ENCODE measurements at regions of chr14 and their contacts with region 1.

Region 1: GRCh38 chr14:48771717-48772116 is 814.5 kb downstream of the RPS29 start:
- DNase-seq: no peak
- ATAC-seq: no peak
- H3K4me3 ChIP-seq: no peak overlapping the region
- H3K4me3 Mint-ChIP-seq: no peak overlapping the region
- H3K27ac ChIP-seq: no peak overlapping the region
- H3K27ac Mint-ChIP-seq: no peak overlapping the region
- H3K4me1 ChIP-seq: no peaks in the 10 kb centered on the region
- H3K4me1 Mint-ChIP-seq: no peaks in the 10 kb centered on the region
- H3K27me3 ChIP-seq: no peaks in the 10 kb centered on the region
- H3K27me3 Mint-ChIP-seq: no peaks in the 10 kb centered on the region
- CTCF ChIP-seq: no peak

Region 2: DNA sequence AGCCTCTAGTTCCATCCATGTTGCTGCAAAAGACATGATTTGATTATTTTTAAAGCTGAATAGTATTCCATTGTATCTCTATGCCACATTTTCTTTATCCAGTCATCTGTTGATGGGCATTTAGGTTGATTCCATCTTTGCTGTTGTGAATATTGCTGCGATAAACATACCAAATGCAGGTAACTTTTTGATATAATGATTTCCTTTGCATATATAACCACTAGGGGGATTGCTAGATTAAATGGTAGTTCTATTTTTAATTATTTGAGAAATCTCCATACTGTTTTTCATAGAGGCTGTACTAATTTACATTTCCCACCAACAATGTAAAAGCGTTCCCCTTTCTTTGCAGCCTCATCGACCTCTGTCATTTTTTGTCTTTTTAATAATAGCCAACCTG is 1438.8 kb before region 1 on chr14:
- CTCF ChIA-PET with region 1: no interaction called
- POLR2A ChIA-PET with region 1: no interaction called
- intact Hi-C with region 1: loop called in 1 of 2 experiments (anchors 5 kb)
- DNase-seq: no peak
- ATAC-seq: no peak
- H3K4me3 ChIP-seq: no peak overlapping the region
- H3K4me3 Mint-ChIP-seq: no peak overlapping the region
- H3K27ac ChIP-seq: no peak overlapping the region
- H3K27ac Mint-ChIP-seq: no peak overlapping the region
- H3K4me1 ChIP-seq: no peaks in the 10 kb centered on the region
- H3K4me1 Mint-ChIP-seq: no peaks in the 10 kb centered on the region
- H3K27me3 ChIP-seq: no peaks in the 10 kb centered on the region
- H3K27me3 Mint-ChIP-seq: no peaks in the 10 kb centered on the region
- CTCF ChIP-seq: no peak

Region 3: GRCh38 chr14:47874350-47874749 is 897.4 kb before region 1 on chr14:
- CTCF ChIA-PET with region 1: no interaction called
- POLR2A ChIA-PET with region 1: no interaction called
- intact Hi-C with region 1: no loop called
- DNase-seq: no peak
- ATAC-seq: no peak
- H3K4me3 ChIP-seq: no peak overlapping the region
- H3K4me3 Mint-ChIP-seq: no peak overlapping the region
- H3K27ac ChIP-seq: no peak overlapping the region
- H3K27ac Mint-ChIP-seq: no peak overlapping the region
- H3K4me1 ChIP-seq: no peaks in the 10 kb centered on the region
- H3K4me1 Mint-ChIP-seq: no peaks in the 10 kb centered on the region
- H3K27me3 ChIP-seq: no peaks in the 10 kb centered on the region
- H3K27me3 Mint-ChIP-seq: no peaks in the 10 kb centered on the region
- CTCF ChIP-seq: no peak

Measured in CD4-positive, alpha-beta T cell (primary cell).